Cardiac septum (tissue), 1 donor: ENCODE measurements at regions of chr5 and their contacts with region 1.

Region 1: GRCh38 chr5:143824851-143825720 is 13.1 kb downstream of the HMHB1 start:
- DNase-seq: peak; percentile 86

Region 2: DNA sequence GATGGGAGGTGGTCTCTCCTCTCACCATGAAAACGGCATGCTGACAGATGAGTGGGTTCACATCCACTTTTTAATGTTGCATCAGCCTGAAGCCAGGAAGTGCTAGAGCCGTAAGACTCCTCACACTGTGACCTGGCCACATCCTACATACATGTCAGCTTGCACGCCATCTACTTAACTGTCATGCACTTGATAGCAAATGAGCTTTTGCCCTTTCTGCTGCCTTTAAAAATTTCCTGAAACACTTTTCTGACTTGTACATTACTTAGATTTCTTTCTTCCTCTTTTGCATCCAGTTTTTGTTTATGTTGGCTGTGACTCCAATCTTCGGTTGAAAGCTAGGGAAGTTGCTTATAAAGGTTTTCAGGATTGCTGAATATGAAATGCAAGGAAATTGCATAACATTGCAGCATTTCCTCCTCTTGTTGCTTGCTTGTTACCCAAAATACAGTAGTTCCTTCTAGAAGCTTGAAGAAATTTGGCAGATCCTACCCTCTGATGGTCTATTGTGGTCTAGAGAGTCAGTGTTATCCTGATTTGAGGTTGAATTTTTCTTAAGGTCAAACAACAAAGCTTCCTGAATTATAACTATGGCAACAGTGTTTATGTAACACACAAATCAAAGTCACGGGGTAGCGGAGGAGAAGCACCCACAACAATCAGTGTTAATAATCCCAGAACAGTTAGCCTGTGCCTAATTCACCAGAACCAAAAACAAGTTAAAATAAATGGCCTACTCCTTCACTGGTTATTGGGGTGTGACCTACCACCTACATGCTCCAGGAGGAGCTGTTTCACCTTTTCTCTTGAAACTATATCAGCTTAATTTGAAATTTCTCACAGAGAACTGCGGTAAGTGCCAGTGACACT is 822.4 kb before region 1 on chr5:
- intact Hi-C with region 1: loop called (anchors 10 kb)
- DNase-seq: no peak

Region 3: DNA sequence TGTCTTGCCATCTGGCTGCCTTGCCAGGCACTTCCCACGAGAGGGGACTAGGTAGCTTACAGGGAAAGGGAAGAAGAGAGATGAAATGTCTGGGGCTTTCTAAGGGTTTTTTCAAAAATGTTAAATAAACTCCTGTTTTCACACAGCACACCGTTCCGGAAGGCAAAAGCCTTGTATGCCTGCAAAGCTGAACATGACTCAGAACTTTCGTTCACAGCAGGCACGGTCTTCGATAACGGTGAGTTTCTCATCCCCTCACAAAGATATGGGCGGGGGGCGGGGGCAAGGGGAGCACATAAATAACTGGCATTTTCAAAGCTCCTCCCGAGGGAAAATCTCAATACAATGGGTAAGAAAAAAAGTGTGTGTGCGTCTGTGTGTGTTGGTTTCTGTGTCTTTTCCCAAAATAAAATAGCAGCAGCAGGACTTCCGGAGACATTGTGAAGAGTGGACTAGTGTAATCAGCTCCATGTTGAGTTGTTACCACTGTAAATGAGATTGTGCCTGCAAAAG is 611.2 kb before region 1 on chr5:
- intact Hi-C with region 1: loop called (anchors 10 kb)
- DNase-seq: no peak

Region 4: DNA sequence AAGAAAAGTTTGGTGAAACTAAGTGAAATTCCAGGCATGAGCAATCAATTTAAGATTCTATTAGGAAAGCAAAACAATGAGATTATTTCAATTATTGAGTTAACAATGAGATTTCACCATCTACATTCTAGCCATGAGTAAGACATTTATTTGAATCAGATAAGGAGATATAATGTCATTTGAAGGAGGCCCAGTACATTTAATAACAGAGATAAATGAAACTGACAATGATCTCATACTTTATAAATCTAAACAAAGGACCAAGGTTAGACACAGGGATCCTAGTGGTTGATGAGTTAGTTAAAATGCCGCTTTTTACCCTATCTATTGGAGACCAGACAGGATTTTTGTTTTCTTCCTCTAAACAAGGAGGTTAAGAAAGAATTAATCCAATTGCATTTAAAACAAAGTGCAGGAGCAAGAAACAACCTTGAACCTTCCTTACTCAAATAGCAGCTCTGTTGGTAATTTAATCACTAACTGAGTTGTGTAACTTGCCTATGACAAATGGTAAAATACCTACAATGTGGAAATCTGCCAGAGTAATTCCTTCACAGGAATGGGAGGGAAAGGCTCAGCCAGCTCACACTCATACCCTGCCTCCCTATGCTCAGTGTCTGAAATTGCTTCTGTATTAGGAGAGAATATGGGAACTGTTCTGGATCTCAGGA is 318.1 kb before region 1 on chr5:
- intact Hi-C with region 1: loop called (anchors 10 kb)
- DNase-seq: no peak

Region 5: DNA sequence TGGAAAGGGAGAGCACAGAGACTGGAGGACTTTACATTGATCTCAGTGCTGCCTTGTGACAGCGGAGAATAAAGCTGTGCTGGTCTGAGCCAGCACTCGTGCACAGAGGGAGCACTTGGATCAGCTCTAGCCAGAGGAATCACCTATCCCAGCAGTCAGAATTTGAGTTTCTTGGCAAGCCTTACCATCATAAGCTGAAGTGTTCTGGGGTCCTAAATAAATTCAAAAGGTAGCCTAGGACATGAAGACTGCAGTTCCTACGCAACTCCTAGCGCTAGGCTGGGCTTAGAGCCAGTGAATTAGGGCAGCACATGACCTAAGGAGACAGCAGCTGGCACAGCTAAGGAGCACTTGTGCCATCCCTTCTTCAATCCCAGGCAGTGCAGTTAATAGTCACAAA is 106.4 kb after region 1 on chr5:
- intact Hi-C with region 1: no loop called
- DNase-seq: no peak

Region 6: GRCh38 chr5:144004146-144004545 is 179.1 kb after region 1 on chr5:
- intact Hi-C with region 1: no loop called
- DNase-seq: no peak

Region 7: GRCh38 chr5:144142139-144142823 is 317.2 kb after region 1 on chr5:
- intact Hi-C with region 1: loop called (anchors 5 kb)
- DNase-seq: no peak

Region 8: GRCh38 chr5:144276044-144276822 is 451.1 kb after region 1 on chr5:
- intact Hi-C with region 1: no loop called
- DNase-seq: no peak